ENCODE measurements at regions of chr10 and their contacts with region 1.

Region 1: DNA sequence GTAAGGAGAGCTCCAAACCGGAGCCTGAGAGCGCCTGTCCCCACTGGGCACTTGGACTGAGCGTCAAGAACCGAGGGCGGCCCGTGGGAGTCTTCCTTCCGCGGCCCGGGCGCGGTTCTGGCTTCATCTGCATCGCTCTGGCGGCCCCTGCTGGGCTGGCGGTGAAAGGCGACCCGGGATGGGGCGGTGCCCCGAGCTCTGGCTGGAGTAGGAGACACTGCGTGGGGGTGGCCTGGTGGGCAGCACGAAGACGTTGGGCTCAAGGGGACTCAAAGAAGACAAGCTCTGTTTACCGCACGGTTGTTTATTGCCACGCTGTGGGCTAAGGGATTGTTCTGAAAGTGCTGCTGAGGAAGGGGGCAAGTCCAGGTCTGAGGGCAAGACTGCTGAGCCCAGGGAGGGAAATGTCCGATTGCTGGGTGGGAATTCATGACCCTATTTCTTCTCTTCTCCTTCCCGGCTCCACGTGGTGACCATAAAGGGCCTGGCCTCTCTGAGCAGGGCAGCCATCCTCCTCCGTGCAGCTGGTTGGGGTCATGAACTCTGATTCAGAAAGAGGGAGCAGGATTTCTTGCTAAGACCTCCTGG is 29.8 kb downstream of the PLAU start:
- DNase-seq: peak; percentile 67 to 76 (median 74)
- H3K4me3 ChIP-seq: peak overlapping the region in 4 of 7 experiments; percentile 22 to 61 (median 44)
- H3K27ac ChIP-seq: peak overlapping the region in 1 of 2 experiments; percentile 43
- H3K4me1 ChIP-seq: peaks cover 0 to 11% (median 6%) of the 10 kb centered on the region in 4 experiments
- H3K27me3 ChIP-seq: no peaks in the 10 kb centered on the region

Region 2: GRCh38 chr10:73848821-73849489 is 91.8 kb before region 1 on chr10:
- CTCF ChIA-PET with region 1: interaction called, 13 read pairs
- POLR2A ChIA-PET with region 1: no interaction called
- DNase-seq: peak; percentile 97 to 99 (median 99)
- H3K4me3 ChIP-seq: peak overlapping the region in 1 of 7 experiments; percentile 23
- H3K27ac ChIP-seq: no peak overlapping the region
- H3K4me1 ChIP-seq: peaks cover 7 to 31% (median 19%) of the 10 kb centered on the region in 4 experiments
- H3K27me3 ChIP-seq: no peaks in the 10 kb centered on the region

Region 3: GRCh38 chr10:73926152-73926764 is 14.5 kb before region 1 on chr10:
- CTCF ChIA-PET with region 1: interaction called, 40 read pairs
- POLR2A ChIA-PET with region 1: no interaction called
- DNase-seq: peak in 2 of 3 donors; percentile 54 to 64
- H3K4me3 ChIP-seq: no peak overlapping the region
- H3K27ac ChIP-seq: no peak overlapping the region
- H3K4me1 ChIP-seq: peaks cover 0 to 24% (median 3%) of the 10 kb centered on the region in 4 experiments
- H3K27me3 ChIP-seq: no peaks in the 10 kb centered on the region

Region 4: DNA sequence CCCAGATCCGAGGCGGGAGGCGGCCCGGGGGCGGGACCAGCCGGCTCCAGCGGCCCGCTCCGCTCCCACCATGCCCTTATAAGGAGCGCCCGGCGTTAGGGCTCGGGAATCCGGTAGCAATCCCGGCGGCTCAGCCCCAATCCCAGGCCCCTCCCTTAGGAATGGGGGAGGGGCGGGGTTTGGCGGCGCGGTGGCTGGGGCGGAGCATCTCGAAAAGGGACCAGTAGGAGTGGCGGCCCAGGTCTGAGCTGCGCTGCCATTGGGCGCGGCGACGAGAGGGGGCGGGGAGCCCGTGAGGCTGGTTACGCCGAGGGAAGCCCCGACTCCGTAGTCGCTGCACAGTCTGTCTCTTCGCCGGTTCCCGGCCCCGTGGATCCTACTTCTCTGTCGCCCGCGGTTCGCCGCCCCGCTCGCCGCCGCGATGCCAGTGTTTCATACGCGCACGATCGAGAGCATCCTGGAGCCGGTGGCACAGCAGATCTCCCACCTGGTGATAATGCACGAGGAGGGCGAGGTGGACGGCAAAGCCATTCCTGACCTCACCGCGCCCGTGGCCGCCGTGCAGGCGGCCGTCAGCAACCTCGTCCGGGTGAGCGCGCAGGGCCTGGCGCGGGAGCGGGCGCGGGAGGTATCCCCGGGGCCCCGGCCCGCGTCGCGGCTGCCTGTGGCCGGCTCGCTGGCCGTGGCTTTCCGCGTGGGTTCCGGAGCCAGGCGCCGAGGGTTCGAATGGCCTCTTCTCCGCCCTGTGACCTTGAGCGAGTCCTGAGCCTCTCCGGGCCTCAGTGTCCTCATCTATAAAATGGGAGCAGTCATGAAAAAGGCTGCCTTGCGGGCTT is 57.3 kb after region 1 on chr10 and contains the start of gene VCL:
- CTCF ChIA-PET with region 1: interaction called, 12 read pairs
- POLR2A ChIA-PET with region 1: interaction called, 3 read pairs
- DNase-seq: peak; percentile 92 to 96 (median 96)
- H3K4me3 ChIP-seq: peak within 1 kb of the TSS; percentile 74 to 97 (median 92)
- H3K27ac ChIP-seq: peak within 1 kb of the TSS; percentile 33 to 82
- H3K4me1 ChIP-seq: peaks cover 7 to 48% (median 32%) of the 10 kb centered on the region in 4 experiments
- H3K27me3 ChIP-seq: no peaks in the 10 kb centered on the region

Region 5: DNA sequence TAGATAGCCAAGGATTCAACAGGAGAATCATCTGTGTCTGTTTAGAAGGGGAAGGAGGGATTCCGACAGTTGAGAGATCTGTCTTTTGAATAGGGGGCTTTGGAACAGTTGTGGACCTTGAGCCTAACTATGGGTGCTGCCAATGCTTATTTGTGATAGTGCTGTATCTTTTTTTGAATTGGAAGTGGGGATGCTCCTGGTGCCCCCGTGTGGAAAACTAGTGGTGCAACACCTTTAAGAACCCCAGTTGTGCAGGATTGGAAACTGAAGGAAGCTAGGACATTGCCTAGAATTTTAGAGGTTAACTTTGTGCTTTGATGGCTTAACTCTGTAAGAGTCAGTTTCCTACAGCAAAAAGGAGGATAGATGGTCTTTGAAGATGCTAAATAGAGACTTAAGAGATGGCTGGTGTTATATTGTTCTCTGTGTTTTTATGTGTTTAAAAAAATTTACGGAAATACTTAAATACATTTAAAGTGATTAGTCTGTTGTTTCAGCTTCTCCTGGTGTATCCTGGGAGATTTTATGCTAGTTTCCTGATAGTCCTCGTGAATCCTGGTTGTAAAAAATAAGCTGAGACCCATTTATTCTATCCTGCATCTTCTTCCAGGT is 140.6 kb after region 1 on chr10:
- CTCF ChIA-PET with region 1: interaction called, 31 read pairs
- POLR2A ChIA-PET with region 1: no interaction called
- DNase-seq: peak; percentile 59 to 72 (median 64)
- H3K4me3 ChIP-seq: no peak overlapping the region
- H3K27ac ChIP-seq: no peak overlapping the region
- H3K4me1 ChIP-seq: peaks cover 4 to 32% (median 11%) of the 10 kb centered on the region in 4 experiments
- H3K27me3 ChIP-seq: no peaks in the 10 kb centered on the region

Measured in common myeloid progenitor, CD34-positive (primary cell).